ENCODE measurements at regions of chr15 and their contacts with region 1.

Region 1: DNA sequence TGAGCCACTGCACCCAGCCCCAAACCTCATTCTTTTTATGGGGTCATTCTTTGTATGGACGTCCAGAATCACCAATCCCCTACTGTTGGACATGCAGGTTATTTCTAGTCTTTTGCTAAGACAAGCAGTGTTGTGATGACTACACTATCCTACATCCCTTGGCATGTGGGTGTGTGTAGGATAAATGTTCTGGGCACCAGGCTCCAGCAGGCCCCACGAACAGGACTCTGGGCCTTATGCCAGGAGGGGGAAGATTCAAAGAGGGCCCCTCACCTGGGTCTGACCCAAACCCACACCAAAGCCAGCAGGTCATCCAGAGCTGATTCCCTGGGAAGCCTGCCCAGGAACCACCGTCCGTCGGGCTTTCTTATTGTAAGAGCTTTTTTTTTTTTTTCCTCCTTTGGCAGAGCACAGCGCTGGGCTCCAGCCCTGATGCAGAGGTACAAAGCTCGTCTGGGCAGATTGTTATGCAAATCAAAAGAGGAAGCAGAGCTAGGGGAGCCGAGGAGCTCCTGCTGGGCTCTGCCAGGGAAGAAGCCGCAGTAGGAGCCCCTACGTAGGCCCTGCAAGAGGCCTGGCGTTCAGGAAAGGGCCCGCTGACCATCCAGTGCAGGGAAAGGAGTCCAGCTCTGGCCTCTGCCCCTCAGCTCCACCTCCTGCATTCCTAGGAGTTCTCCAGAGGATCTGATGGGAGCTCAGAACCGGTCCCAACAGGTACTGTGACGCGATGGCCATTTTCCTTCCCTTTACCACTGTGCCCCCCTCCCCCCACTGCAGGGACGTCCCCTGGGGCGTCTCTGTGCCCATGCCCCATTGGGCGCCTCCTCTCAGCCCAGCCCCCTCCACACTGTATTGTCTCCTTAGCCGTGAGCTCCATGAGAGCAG is 29.0 kb upstream of the FURIN start:
- DNase-seq: peak; percentile 32
- H3K4me3 Mint-ChIP-seq: peak overlapping the region; percentile 80
- H3K27ac Mint-ChIP-seq: peak overlapping the region; percentile 89
- H3K4me1 Mint-ChIP-seq: peaks cover 80% of the 10 kb centered on the region
- H3K27me3 Mint-ChIP-seq: no peaks in the 10 kb centered on the region

Region 2: GRCh38 chr15:90818251-90819210 is 20.9 kb before region 1 on chr15:
- CTCF ChIA-PET with region 1: interaction called, 13 read pairs
- POLR2A ChIA-PET with region 1: interaction called, 3 read pairs
- DNase-seq: peak; percentile 36
- H3K4me3 Mint-ChIP-seq: peak overlapping the region; percentile 27
- H3K27ac Mint-ChIP-seq: peak overlapping the region; percentile 84
- H3K4me1 Mint-ChIP-seq: peaks cover 71% of the 10 kb centered on the region
- H3K27me3 Mint-ChIP-seq: no peaks in the 10 kb centered on the region

Region 3: GRCh38 chr15:90851114-90851513 is 11.7 kb after region 1 on chr15:
- CTCF ChIA-PET with region 1: interaction called, 30 read pairs
- POLR2A ChIA-PET with region 1: no interaction called
- DNase-seq: peak; percentile 39
- H3K4me3 Mint-ChIP-seq: peak overlapping the region; percentile 54
- H3K27ac Mint-ChIP-seq: peak overlapping the region; percentile 92
- H3K4me1 Mint-ChIP-seq: peaks cover 70% of the 10 kb centered on the region
- H3K27me3 Mint-ChIP-seq: no peaks in the 10 kb centered on the region